ENCODE measurements at regions of chr2 and their contacts with region 1.

Region 1: DNA sequence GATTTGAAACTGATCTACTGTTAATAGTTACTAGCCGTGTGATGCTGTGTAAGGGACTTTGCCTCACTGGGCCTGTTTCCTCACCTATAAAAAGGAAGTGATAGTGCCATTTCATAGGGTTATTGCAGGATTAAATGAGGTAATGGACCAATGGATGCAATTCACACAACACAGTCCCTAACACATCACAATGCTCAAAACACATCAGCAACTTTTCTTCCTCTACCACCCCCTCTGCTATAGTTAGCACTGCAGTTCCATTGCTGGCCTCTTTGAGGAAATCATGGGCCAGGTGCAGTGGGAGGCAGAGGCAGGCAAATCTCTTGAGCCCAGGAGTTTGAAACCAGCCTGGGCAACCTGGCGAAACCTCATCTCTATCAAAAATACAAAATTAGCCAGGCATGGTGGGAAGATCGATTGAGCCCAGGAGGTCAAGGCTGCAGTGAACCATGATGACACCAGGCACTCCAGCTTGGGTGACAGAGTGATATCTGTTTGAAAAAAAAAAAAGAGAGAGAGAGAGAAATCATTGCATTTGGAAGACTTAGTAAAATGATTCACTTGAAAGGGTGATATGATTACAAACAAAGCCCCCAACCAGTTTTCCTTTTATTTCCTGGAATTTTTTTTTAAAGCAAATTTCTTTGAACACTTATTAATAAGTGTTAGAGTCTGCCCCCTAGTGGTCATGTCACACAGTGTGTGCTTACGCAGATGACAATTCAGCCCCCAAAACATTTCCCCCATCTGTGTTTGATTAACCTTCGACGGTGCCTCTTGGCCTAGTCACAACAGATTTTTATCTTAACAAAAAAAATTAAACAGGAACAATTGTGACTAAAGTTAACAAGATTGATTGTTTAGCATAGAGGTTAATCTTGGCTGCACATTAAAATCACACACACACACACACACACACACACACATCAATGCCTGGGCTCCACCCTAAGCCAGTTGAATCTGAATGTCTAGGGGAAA is 88.6 kb upstream of the BCL11A start:
- DNase-seq: peak; percentile 38 to 67
- ATAC-seq: peak in 1 of 2 experiments; percentile 87; a peak in 3 of 6 replicates
- H3K4me3 ChIP-seq: no peak overlapping the region
- H3K27ac ChIP-seq: no peak overlapping the region
- H3K4me1 ChIP-seq: no peaks in the 10 kb centered on the region
- CTCF ChIP-seq: peak; percentile 78
- EP300 ChIP-seq: no peak
- POLR2A ChIP-seq: no peak
- RAD21 ChIP-seq: peak; percentile 20 to 41; a peak in 3 of 5 replicates

Region 2: DNA sequence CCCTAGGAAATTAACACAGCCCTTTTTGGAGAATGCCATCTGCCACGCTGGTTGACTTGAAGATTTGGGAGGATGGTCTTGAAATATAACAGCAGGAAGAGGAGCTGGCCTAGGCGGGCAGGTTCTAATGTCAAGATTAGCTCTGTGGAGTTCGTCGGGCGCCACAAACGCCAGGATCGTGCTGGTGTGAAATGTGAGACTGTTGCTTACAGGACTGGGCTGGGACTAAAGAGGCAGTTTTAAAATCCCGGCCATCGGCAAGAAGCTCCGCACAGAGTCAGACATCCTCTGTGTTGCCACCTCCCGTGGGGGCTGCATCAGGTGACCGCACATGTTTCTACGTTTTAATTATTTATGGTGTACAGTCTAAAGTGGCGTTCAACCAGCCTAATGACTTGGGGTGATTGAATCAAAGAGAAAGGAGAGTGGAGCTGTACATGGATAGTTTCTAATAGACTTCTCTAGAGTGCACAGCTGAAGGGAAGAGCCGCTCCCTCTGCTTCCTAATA is 10.8 kb after region 1 on chr2:
- CTCF ChIA-PET with region 1: interaction called, 20 read pairs
- POLR2A ChIA-PET with region 1: interaction called, 3 read pairs
- DNase-seq: no peak
- ATAC-seq: peak in 1 of 2 experiments; percentile 14; a peak in 1 of 6 replicates
- H3K4me3 ChIP-seq: no peak overlapping the region
- H3K27ac ChIP-seq: no peak overlapping the region
- H3K4me1 ChIP-seq: no peaks in the 10 kb centered on the region
- CTCF ChIP-seq: no peak
- EP300 ChIP-seq: no peak
- POLR2A ChIP-seq: no peak
- RAD21 ChIP-seq: no peak

Measured in A549 (cell line).